ENCODE measurements at regions of chr5 and their contacts with region 1.

Region 1: DNA sequence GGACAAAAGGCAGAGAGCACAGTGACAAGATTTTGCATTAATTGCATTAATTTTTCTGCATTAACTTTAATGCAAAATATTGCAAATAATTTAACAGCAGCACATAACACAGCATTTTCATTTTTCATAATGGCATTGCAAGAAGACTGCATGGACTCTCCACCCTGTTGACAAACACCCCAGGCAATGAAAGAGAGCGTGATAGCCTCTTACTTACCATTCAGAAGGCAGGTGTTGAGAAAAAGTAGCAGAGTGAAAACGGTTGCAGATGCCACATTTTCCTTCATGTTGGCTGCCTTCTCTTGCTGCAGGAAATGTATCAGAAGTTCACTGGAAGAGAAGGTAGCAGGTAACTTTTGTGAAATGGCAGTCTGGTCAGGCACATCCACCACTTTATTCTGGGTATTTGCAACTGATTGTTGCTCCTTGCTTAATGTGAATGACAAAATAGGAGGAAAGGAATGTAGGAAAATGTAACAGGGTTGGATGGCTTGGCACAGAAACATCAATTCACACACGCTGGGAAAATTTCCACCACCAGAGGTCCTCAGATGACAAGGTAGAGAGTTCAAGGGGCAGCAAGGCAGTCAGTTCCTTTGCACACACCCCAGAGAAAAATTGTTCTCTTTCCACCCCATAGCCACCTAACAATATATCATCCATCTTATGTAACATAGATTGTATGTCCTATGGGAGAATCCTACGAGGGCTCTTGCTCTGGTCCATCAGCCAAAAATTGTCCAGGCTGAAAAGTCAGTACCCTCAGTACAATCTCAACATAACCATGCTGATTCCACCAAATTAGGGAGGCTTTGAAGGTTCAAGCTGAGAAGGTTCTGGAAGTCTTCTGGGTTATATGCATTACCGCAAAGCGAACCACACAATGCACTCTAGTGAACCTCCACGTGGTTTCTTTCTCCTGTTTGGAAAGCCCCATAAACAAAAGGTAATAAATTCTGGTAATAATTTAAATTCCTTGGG is 41.9 kb upstream of the AGXT2 start:
- DNase-seq: peak; percentile 25 to 69 (median 40)
- ATAC-seq: peak; percentile 52
- H3K4me3 ChIP-seq: no peak overlapping the region
- H3K4me3 Mint-ChIP-seq: no peak overlapping the region
- H3K27ac ChIP-seq: no peak overlapping the region
- H3K27ac Mint-ChIP-seq: no peak overlapping the region
- H3K4me1 ChIP-seq: no peaks in the 10 kb centered on the region
- H3K4me1 Mint-ChIP-seq: no peaks in the 10 kb centered on the region
- H3K27me3 ChIP-seq: peaks cover 0 to 7% of the 10 kb centered on the region in 2 experiments
- H3K27me3 Mint-ChIP-seq: peaks cover 5% of the 10 kb centered on the region
- CTCF ChIP-seq: peak; percentile 66

Region 2: DNA sequence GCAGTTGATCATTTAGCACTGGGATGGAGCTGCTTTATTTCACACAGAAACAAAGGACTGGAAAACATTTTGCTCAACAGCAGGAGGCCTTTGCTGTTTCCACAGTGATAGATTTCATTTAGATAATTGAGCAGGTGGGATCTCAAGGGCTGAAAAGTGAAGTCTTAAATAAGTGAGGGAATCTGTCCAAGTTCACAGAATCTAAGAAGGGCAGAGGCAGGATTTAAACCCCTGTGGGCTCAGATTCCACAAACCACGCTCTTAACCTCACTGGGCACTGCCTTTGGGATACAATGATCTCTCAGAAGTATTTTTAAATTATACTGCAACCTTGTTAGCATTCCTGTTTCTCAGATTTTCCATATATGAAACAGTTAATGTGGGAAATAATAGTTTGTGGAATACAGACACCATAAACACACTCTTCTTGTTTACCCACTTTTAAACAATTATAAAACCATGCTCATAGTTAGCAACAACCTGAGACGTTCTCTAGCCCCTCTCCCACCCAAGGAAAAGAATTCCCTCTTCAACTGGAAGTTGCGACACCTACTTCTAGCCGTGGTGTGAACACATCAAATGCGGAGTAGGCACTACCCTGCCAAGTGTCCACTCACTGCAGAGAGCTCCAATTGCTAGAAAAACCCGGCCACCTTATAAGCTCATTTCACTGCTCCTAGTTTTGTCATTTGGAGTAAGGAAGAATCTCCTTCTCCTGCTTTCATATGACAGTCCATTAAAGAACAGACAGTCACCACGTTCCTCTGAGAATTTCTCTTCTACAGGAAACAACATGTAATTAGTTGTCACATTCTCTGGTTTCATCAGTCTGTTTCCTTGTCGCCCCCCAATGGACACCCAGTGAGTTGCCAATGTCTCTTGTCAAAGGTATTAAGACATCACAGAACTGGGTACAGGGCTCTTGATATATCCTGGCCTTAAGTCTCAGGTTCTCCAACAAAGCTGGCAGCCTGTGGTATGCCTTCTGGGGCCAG is 93.2 kb after region 1 on chr5:
- CTCF ChIA-PET with region 1: no interaction called
- POLR2A ChIA-PET with region 1: no interaction called
- intact Hi-C with region 1: loop called in 1 of 2 experiments (anchors 5 kb)
- DNase-seq: peak in 3 of 14 experiments; percentile 12 to 20 (median 15)
- ATAC-seq: no peak
- H3K4me3 ChIP-seq: no peak overlapping the region
- H3K4me3 Mint-ChIP-seq: no peak overlapping the region
- H3K27ac ChIP-seq: no peak overlapping the region
- H3K27ac Mint-ChIP-seq: no peak overlapping the region
- H3K4me1 ChIP-seq: no peaks in the 10 kb centered on the region
- H3K4me1 Mint-ChIP-seq: no peaks in the 10 kb centered on the region
- H3K27me3 ChIP-seq: no peaks in the 10 kb centered on the region
- H3K27me3 Mint-ChIP-seq: peaks cover 12% of the 10 kb centered on the region
- CTCF ChIP-seq: no peak

Region 3: GRCh38 chr5:35202319-35203111 is 112.9 kb after region 1 on chr5:
- CTCF ChIA-PET with region 1: no interaction called
- POLR2A ChIA-PET with region 1: no interaction called
- intact Hi-C with region 1: loop called (anchors 2 to 5 kb)
- DNase-seq: peak in 10 of 14 experiments; percentile 2 to 50 (median 16)
- ATAC-seq: no peak
- H3K4me3 ChIP-seq: no peak overlapping the region
- H3K4me3 Mint-ChIP-seq: no peak overlapping the region
- H3K27ac ChIP-seq: no peak overlapping the region
- H3K27ac Mint-ChIP-seq: no peak overlapping the region
- H3K4me1 ChIP-seq: no peaks in the 10 kb centered on the region
- H3K4me1 Mint-ChIP-seq: no peaks in the 10 kb centered on the region
- H3K27me3 ChIP-seq: peaks cover 3 to 10% of the 10 kb centered on the region in 2 experiments
- H3K27me3 Mint-ChIP-seq: peaks cover 46% of the 10 kb centered on the region
- CTCF ChIP-seq: peak; percentile 45

Region 4: DNA sequence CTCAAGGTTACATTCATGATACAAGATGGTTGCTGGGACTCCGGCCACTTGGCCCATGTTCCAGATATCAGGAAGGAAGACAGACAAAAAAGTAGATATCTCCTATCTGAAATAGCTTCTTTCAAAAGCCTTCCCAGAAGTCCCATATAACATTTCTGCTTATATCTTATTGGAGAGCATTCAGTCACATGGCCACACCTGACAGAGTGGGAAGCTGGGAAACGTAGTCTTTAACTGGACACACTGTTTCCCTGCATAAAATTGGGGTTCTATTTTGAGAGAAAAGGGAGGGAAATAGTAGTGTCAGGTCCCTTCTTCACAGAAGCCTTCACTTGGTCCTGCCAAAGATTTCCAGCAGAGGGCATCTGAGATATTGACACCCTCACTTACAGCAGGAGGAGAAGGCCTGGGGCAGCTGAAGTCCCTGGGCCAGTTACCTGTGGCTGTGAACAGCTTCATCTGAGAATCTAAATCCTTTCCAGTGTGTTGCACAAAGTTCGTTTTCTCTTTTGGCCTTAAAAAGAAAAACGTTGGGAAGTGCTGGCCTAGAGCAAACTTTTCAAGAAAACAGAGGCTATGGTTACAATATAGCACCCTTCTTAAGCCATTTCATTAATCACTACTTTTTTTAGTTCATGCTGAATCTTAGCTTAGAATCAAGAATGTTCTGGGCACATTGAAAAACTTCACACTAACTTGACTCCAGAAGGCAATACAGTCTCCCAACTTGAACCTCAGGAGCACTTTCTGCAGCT is 561.6 kb after region 1 on chr5:
- CTCF ChIA-PET with region 1: no interaction called
- POLR2A ChIA-PET with region 1: no interaction called
- intact Hi-C with region 1: loop called (anchors 1 to 2 kb)
- DNase-seq: peak; percentile 37 to 84 (median 58)
- ATAC-seq: peak; percentile 99
- H3K4me3 ChIP-seq: no peak overlapping the region
- H3K4me3 Mint-ChIP-seq: no peak overlapping the region
- H3K27ac ChIP-seq: no peak overlapping the region
- H3K27ac Mint-ChIP-seq: peak overlapping the region; percentile 23
- H3K4me1 ChIP-seq: peaks cover 5% of the 10 kb centered on the region
- H3K4me1 Mint-ChIP-seq: peaks cover 16% of the 10 kb centered on the region
- H3K27me3 ChIP-seq: no peaks in the 10 kb centered on the region
- H3K27me3 Mint-ChIP-seq: no peaks in the 10 kb centered on the region
- CTCF ChIP-seq: peak; percentile 84

Region 5: GRCh38 chr5:35771309-35771708 is 681.7 kb after region 1 on chr5:
- CTCF ChIA-PET with region 1: no interaction called
- POLR2A ChIA-PET with region 1: no interaction called
- intact Hi-C with region 1: loop called (anchors 5 to 10 kb)
- DNase-seq: no peak
- ATAC-seq: no peak
- H3K4me3 ChIP-seq: no peak overlapping the region
- H3K4me3 Mint-ChIP-seq: no peak overlapping the region
- H3K27ac ChIP-seq: no peak overlapping the region
- H3K27ac Mint-ChIP-seq: no peak overlapping the region
- H3K4me1 ChIP-seq: peaks cover 3% of the 10 kb centered on the region
- H3K4me1 Mint-ChIP-seq: peaks cover 38% of the 10 kb centered on the region
- H3K27me3 ChIP-seq: no peaks in the 10 kb centered on the region
- H3K27me3 Mint-ChIP-seq: no peaks in the 10 kb centered on the region
- CTCF ChIP-seq: no peak